ENCODE measurements at regions of chr5 and their contacts with region 1.

Region 1: DNA sequence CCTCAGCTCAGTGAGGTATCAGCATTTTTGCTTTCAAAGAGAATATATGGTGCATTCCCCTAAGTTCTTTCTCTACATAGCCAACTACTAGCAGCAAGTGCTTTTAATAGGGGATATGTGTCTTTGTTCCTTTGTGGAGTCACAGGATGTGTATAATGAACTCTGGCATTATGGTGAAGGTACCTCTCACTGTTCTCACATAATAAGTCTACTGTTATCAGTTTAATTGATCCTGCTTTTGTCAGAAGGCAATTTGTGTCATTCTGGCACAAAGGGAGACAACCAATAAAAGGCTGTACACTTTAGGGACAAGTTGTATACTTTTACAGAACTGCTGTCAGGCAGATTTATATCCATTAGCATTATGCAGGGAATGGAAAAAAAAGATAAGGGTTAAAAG is 531.4 kb upstream of the RIOK2 start:
- DNase-seq: no peak
- H3K4me3 ChIP-seq: no peak overlapping the region
- H3K27ac ChIP-seq: no peak overlapping the region
- H3K4me1 ChIP-seq: no peaks in the 10 kb centered on the region
- H3K27me3 ChIP-seq: no peaks in the 10 kb centered on the region
- CTCF ChIP-seq: no peak

Region 2: GRCh38 chr5:97192580-97193358 is 521.7 kb before region 1 on chr5:
- intact Hi-C with region 1: no loop called
- DNase-seq: no peak
- H3K4me3 ChIP-seq: no peak overlapping the region
- H3K27ac ChIP-seq: no peak overlapping the region
- H3K4me1 ChIP-seq: no peaks in the 10 kb centered on the region
- H3K27me3 ChIP-seq: no peaks in the 10 kb centered on the region
- CTCF ChIP-seq: no peak

Region 3: GRCh38 chr5:97764700-97765099 is 50.3 kb after region 1 on chr5:
- intact Hi-C with region 1: loop called (anchors 1 kb)
- DNase-seq: no peak
- H3K4me3 ChIP-seq: no peak overlapping the region
- H3K27ac ChIP-seq: no peak overlapping the region
- H3K4me1 ChIP-seq: no peaks in the 10 kb centered on the region
- H3K27me3 ChIP-seq: no peaks in the 10 kb centered on the region
- CTCF ChIP-seq: no peak